Motor neuron (in vitro differentiated cells): ENCODE measurements at regions of chr16 and their contacts with region 1.

Region 1: DNA sequence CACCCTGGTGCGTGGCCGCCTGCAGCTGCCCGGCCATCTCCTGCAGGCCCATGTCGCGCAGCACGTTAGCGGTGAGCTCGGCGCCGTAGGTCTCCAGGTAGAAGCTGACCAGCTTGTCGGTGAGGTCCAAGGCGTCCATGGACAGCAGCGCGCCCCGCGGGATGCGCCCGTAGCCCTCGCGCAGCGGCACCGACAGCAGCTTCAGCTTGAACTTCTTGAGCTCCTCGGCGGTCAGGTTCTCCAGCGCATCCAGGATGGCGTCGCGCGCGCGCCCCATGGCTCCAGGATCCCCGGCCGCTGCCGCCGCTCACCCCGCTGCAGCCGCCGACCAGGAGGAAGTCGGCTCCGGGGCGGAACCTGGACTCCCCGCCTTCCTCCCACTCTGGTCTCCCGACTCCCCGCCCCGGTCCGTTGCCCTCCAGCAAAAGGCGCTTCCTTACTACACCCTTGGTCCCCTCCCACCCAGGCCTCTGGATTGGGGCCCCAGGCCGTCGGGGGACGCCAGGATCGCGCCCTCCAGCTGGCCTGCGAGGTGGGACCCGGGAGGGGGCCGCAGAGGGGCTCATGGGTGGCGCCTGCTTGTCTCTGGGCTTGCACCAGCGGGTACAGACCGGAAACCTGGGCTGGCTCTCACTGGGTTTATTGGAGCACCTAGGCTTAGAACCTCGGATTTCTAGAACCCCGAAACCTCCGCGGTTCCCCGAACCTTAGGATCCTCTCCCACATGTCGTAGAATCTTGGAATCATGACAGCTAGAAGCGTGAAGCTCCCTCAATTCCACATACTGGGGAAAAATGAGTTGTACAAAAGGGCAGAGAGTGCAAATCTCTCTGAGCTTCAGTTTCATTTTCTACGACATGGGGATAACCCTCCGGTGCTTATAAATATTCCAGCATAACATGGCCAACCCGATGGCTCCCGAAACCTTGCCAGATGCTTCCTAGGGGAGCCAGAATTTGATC is at the start of gene PYCARD:
- ATAC-seq: peak in 7 of 8 experiments; percentile 9 to 52 (median 36)
- H3K4me3 ChIP-seq: no peak within 1 kb of the TSS
- H3K27ac ChIP-seq: no peak within 1 kb of the TSS
- H3K4me1 ChIP-seq: no peaks in the 10 kb centered on the region
- total RNA-seq, gene PYCARD: 0.43 to 45.6 (median 1.2) TPM

Region 2: DNA sequence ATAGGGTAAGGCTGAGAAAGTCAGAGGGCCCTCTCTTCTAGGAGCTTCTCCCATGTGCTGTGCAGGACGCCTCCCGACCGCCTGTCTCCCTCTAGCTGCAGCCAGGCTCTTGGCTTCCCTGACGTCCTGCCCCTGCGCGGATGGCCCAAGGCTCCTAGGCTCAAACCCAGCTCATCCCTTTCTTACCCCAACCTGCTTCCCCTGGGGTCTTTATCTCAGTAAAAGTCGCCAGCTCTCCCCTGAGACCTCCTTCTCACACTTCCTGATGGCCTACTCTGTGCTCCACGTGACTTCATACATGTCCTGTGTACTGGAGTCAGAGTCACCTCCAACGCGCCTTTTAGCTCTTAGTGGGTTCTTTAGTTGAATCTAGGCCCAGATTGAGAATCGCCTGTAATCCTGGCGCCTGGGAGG is 666.9 kb before region 1 on chr16:
- in situ Hi-C with region 1: no loop called
- ATAC-seq: peak; percentile 60 to 79 (median 75)
- H3K4me3 ChIP-seq: peak overlapping the region; percentile 48 to 61 (median 53)
- H3K27ac ChIP-seq: peak overlapping the region; percentile 84 to 85
- H3K4me1 ChIP-seq: peaks cover 14 to 21% of the 10 kb centered on the region in 2 donors

Region 3: GRCh38 chr16:31301708-31302400 is 99.2 kb after region 1 on chr16:
- in situ Hi-C with region 1: loop called in 1 of 9 experiments (anchors 25 kb)
- ATAC-seq: peak in 3 of 8 experiments; percentile 62 to 85 (median 84)
- H3K4me3 ChIP-seq: no peak overlapping the region
- H3K27ac ChIP-seq: no peak overlapping the region
- H3K4me1 ChIP-seq: no peaks in the 10 kb centered on the region

Region 4: DNA sequence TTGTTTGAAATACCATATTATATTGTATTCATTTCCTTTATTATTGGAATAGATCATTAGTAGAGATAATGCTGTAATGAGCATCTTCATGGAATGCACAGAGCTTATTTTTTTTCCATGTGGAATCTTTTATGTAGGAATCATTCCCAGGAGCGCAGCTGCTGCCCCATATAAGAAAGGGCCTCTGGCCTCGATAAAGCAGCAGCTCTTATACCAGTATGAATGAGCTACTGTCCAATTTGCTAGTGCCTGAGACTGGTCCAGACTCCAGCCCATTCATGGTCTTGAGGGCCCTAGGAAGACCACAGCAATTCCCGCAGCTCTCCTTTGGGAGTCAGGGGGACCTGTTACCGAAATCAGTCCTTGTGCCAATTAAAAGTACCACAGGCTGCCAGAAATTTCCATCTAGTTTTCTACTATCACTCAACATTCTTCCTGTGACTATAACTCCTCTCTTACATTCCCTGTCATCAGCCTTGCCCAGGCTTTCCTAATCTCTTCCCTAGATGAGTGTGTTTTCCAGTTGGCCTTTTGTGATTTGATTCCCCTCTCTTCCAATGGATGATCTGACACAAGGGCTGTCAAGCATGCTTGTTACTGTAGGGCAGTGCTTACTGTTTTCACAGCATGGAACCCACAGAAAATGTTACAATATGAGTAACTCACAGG is 238.0 kb after region 1 on chr16:
- in situ Hi-C with region 1: loop called in 3 of 9 experiments (anchors 10 to 25 kb)
- ATAC-seq: peak in 1 of 8 experiments; percentile 55
- H3K4me3 ChIP-seq: no peak overlapping the region
- H3K27ac ChIP-seq: no peak overlapping the region
- H3K4me1 ChIP-seq: peaks cover 0 to 4% of the 10 kb centered on the region in 2 donors

Region 5: DNA sequence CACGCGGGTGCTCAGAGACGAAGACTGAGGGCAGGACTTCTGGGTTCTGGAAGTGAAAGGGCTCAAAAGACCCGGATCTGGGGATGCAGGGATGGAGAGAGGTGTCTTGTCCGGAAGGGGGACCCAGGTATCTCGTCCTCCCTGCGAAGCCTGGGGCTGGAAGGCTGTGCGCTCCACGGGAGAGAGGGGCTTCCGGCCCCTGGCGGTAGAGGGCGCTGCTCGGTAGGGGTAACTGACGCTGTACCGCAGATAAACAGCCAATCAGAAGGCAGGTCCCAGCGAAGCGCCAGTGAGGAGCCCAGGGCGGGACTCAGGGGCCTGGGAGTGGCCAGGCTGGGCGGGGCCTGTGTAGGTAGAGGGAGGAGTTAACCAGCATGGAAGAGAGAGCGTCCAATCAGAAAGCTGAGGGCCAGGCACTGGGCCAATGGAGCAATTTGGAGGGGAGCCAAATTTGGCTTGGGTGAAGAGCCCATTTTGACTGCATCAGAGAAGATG is 270.1 kb after region 1 on chr16:
- in situ Hi-C with region 1: no loop called
- ATAC-seq: peak in 7 of 8 experiments; percentile 2 to 82 (median 31)
- H3K4me3 ChIP-seq: peak overlapping the region in 3 of 5 donors; percentile 36 to 46 (median 45)
- H3K27ac ChIP-seq: no peak overlapping the region
- H3K4me1 ChIP-seq: peaks cover 10 to 18% of the 10 kb centered on the region in 2 donors